Left ventricle myocardium superior (tissue), 1 donor: ENCODE measurements at regions of chr17 and their contacts with region 1.

Region 1: DNA sequence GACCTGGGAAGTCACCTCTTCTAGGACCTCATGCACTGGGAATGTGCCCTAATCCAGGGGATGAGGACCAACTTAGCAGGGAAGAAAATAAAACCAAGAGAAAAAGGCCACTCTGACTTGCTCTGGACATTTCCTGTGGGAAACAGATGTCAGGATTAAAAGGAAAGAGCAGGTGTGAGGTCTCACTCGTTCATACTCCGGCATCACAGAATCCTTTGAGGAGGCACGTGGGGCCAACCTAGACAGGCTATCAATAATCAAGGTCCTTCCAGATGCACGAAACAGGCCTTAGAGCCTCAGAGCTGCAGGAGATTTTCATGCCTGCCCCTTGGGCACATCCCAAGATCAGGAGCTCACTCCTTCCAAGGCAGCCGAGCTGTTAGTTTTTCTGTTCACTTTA is 321.5 kb upstream of the CCL2 start:
- DNase-seq: no peak
- ATAC-seq: no peak

Region 2: DNA sequence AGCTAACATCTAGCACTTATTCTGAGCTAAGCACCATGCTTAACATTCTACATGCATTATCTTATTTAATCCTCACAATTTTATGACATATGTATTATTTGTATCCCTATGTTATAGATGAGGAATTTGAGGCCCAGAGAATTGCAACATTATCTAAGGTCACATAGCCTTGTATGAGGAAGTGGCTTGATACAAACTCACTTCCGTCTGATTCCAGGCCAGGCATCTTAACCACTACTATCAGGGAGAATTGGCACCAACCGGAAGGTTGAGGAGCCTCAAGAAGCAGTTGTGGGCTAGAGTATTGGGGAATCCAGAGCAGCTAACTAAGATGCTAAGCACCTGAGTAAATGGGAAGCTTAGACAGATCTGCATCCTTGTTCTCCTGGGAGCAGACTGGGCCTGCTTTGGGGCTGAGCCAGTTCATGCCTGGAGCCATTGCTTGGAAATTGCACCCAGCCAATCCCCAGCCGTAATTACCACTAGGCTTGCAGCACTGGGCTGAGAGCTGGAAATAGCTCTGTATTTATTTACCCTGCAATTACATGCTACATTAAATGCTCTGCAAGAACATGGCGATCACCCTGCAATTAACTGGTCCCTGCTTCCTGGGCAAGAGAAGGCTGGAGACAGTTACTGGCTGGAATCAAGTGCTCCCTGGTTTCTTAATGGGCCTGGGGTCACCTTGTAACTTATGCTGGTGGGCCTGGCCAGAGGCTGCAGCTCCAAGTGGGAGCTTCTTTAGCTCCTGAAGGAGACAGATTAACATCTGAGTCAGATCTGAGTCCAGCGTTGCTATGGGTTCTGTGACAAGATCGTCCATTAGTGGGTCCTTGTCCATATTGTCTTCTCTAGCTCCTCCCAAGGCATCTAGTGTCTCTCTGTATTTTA is 48.4 kb after region 1 on chr17:
- intact Hi-C with region 1: loop called (anchors 10 kb)
- DNase-seq: peak; percentile 34
- ATAC-seq: peak; percentile 15

Region 3: GRCh38 chr17:34012709-34013375 is 79.3 kb after region 1 on chr17:
- intact Hi-C with region 1: no loop called
- DNase-seq: no peak
- ATAC-seq: no peak